ENCODE measurements at regions of chr4 and their contacts with region 1.

Region 1: GRCh38 chr4:111631215-111631999 is 513.8 kb upstream of the FAM241A start:
- DNase-seq: no peak
- ATAC-seq: no peak; the same call in 2 of the 3 replicates
- H3K4me3 ChIP-seq: no peak overlapping the region
- H3K27ac ChIP-seq: no peak overlapping the region
- H3K4me1 ChIP-seq: no peaks in the 10 kb centered on the region
- H3K27me3 ChIP-seq: no peaks in the 10 kb centered on the region
- CTCF ChIP-seq: no peak
- EP300 ChIP-seq: no peak
- POLR2A ChIP-seq: no peak
- RAD21 ChIP-seq: no peak

Region 2: DNA sequence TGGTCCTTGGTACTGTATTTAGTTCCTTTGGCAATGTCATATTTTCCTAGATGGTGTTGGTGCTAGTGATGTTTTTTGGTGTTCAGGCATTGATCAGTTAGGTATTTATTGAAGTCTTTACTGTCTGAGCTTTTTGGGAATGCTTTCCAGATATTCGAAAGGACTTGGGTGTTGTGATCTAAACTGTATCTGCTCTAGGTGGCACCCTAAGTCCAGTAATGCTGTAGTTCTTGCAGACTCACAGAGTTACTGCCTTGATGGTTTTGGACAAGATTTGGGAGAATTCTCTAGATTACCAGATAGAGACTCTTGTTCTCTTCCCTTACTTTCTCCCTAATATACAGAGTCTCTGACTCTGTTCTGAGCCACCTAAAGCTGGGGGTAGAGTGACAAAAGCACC is 495.0 kb before region 1 on chr4:
- CTCF ChIA-PET with region 1: no interaction called
- POLR2A ChIA-PET with region 1: no interaction called
- in situ Hi-C with region 1: no loop called
- intact Hi-C with region 1: loop called (anchors 2 kb)
- DNase-seq: peak; percentile 7
- ATAC-seq: no peak
- H3K4me3 ChIP-seq: no peak overlapping the region
- H3K27ac ChIP-seq: no peak overlapping the region
- H3K4me1 ChIP-seq: no peaks in the 10 kb centered on the region
- H3K27me3 ChIP-seq: no peaks in the 10 kb centered on the region
- CTCF ChIP-seq: peak; percentile 38
- EP300 ChIP-seq: no peak
- POLR2A ChIP-seq: no peak
- RAD21 ChIP-seq: no peak

Measured in HepG2 (cell line).